Pancreas (tissue), 10 donors: ENCODE measurements at regions of chr14 and their contacts with region 1.

Region 1: DNA sequence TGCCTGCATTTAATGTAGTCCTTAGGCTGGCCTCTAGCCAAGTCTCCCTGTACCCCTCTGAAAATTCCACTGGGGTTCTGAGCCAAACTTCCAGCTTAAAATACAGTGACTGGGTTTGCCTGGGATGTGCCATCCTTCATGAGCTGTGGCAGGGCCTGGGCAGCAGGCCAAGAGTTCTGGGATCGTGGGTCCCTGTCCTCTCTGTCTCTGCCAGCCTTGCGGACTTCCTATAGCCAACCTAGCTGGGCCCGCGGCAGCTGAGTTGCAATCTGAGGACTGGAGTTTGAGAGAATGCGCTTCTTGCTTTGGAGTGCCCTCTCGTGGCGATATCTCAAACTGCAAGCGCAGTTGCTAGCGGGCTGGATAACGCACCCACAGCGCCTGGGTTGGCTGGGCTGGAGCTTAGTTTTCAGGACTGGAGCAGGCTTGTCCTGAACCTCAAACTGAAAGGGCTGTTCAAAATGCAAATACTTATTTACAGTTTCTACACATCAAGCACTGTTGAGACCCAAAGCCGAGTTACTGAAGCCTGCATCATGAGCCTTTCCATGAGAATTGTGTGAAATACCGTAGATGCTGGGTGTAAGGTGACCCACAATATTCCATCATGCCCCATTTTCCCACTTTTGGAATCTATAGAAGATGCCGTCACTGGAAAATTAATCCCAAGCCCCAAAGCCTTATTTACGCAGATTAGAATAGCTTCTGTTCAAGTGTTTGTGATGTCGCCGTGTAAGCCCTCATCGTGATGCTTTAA is 7.3 kb upstream of the IFI27L2 start:
- DNase-seq: peak; percentile 73 to 97 (median 90)
- ATAC-seq: peak; percentile 95 to 99 (median 98)
- H3K4me3 ChIP-seq: no peak overlapping the region
- H3K27ac ChIP-seq: no peak overlapping the region
- H3K4me1 ChIP-seq: no peaks in the 10 kb centered on the region
- H3K27me3 ChIP-seq: no peaks in the 10 kb centered on the region
- CTCF ChIP-seq: peak; percentile 93 to 97 (median 94)

Region 2: DNA sequence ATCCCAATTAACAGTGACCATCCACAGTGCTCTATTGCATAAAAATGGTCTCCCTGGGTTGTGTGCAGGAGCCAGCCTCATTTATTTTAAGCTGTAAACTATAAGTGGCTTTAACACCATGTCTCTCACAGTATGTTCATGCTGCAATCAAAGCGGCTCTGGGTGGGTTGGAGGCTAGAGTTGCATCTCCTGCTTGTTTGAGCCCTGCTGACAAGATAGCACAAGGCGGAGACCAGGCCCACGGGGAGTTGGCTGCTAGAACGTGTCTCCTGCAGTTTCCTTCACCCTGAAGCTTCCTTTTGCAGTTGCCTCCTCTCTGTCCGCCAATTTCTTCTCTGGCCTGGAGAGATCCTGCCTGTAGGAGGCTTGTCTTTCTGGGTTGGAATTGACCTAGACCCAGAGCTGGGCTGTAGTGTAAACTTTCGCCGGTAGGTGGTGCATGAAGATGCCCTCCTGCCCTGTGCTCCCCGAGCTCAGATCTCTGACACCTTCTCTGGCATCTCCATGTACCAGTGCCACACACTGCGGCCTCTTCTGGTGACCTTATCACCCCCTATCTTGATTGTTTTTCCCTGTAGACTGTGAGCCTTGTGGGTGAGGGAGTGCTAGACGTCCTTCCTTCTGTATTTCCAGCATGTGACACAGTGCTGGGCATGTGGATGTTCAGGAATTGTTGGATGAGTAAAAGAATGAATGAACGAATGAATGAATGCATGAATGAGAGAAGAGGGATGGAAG is 100.3 kb before region 1 on chr14:
- intact Hi-C with region 1: loop called in 2 of 3 experiments (anchors 5 kb)
- DNase-seq: peak; percentile 55 to 91 (median 72)
- ATAC-seq: peak; percentile 84 to 98 (median 94)
- H3K4me3 ChIP-seq: no peak overlapping the region
- H3K27ac ChIP-seq: no peak overlapping the region
- H3K4me1 ChIP-seq: no peaks in the 10 kb centered on the region
- H3K27me3 ChIP-seq: no peaks in the 10 kb centered on the region
- CTCF ChIP-seq: peak; percentile 63 to 83 (median 77)